ENCODE measurements at regions of chr3 and their contacts with region 1.

Region 1: DNA sequence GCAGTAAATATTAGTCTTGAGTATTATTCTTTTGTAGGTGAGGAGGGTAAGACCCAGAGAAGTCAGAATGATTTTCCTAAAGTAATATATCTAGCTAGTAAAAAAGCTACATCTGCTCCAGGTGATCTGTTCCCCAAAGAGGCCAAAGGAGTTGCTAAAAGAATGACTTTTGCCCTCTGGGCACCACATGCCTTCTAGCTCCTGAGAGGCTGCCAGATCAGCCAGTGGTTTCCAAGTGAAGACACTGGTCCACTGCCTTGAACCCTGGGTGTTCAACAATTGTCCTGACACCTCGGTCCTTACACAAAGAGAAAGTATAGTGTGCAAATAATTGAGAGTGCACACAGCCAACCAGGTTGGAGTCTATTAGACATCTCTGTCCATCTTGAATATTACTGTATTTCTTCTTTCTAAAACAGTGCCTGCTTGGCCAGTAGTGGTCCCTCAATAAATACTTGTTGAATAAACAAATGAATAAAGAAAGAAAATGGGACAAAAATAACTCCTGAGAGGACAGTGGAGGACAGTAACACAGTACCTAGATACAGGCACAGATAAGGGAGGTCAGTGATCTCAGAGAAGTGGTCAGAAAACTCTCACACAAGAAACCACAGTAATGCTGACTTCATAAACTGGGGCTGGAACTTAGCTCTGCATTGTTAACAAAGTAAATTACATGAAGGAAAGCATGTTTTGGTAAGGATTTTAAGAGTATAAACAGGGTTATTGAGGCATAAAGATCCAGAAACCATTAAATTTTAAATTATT is 56.6 kb upstream of the CSTA start:
- DNase-seq: no peak
- H3K4me3 ChIP-seq: no peak overlapping the region
- H3K27ac ChIP-seq: no peak overlapping the region
- H3K4me1 ChIP-seq: no peaks in the 10 kb centered on the region
- H3K27me3 ChIP-seq: no peaks in the 10 kb centered on the region
- CTCF ChIP-seq: no peak
- POLR2A ChIP-seq: no peak

Region 2: DNA sequence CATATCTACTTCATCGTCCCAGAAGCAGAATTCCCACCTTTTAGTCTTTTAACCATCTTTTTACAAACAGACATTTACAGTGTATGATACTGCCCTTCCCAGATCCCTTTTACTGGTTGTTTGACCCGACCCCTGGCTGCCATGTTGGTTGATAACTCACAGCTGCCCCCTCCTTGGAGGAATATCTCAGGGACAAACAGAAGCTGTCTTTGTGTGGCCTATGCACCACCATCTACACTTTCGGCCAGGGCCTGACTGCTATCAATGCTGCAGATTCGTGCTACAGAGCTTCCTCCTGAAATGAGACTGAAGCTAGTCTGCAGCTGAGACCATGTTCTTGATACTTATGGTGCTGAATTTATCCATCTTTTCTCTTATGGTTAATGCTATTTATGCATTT is 716.1 kb before region 1 on chr3:
- intact Hi-C with region 1: loop called in 1 of 2 experiments (anchors 10 kb)
- DNase-seq: no peak
- H3K4me3 ChIP-seq: peak overlapping the region in 2 of 4 donors; percentile 1 to 21
- H3K27ac ChIP-seq: peak overlapping the region in 3 of 5 donors; percentile 13 to 64 (median 63)
- H3K4me1 ChIP-seq: peaks cover 0 to 8% of the 10 kb centered on the region in 2 donors
- H3K27me3 ChIP-seq: no peaks in the 10 kb centered on the region
- CTCF ChIP-seq: no peak
- POLR2A ChIP-seq: no peak

Region 3: DNA sequence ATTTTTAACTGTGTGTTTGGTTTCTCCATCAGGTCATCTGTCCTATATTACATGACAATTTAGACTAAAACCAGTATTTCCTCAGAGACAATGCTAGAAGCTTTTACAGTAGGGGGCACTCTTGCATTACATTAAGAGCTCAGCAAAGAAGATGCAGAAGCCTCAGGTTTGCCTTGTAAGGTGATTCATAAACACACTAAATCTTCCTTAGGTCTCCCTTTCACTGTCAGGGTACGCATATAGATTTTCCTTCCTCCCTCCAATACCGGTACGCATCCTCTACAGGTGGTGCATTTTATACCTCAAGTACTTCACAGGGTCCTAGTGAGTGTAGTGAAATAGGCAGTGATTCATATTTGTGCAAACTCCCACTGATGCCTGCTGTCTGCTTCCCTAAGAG is 166.8 kb before region 1 on chr3:
- intact Hi-C with region 1: loop called (anchors 5 to 10 kb)
- DNase-seq: peak in 2 of 7 donors; percentile 18 to 19
- H3K4me3 ChIP-seq: no peak overlapping the region
- H3K27ac ChIP-seq: no peak overlapping the region
- H3K4me1 ChIP-seq: no peaks in the 10 kb centered on the region
- H3K27me3 ChIP-seq: no peaks in the 10 kb centered on the region
- CTCF ChIP-seq: peak; percentile 33 to 69 (median 62)
- POLR2A ChIP-seq: no peak

Region 4: GRCh38 chr3:122679085-122679881 is 410.8 kb after region 1 on chr3:
- intact Hi-C with region 1: no loop called
- DNase-seq: peak; percentile 82 to 94 (median 88)
- H3K4me3 ChIP-seq: peak overlapping the region in 2 of 4 donors; percentile 15 to 97
- H3K27ac ChIP-seq: peak overlapping the region; percentile 90 to 99 (median 95)
- H3K4me1 ChIP-seq: peaks cover 8 to 38% of the 10 kb centered on the region in 2 donors
- H3K27me3 ChIP-seq: no peaks in the 10 kb centered on the region
- CTCF ChIP-seq: peak; percentile 65 to 91 (median 87)
- POLR2A ChIP-seq: peak in 1 of 2 donors; percentile 8

Measured in adrenal gland (tissue), 19 donors.